Left cardiac atrium (tissue), 4 donors: ENCODE measurements at regions of chr18 and their contacts with region 1.

Region 1: GRCh38 chr18:74652392-74652988 is 54.8 kb downstream of the ZNF407 start:
- DNase-seq: no peak
- ATAC-seq: no peak

Region 2: GRCh38 chr18:74291771-74292540 is 360.5 kb before region 1 on chr18 and contains the start of gene CYB5A:
- intact Hi-C with region 1: no loop called
- DNase-seq: peak; percentile 98
- ATAC-seq: peak; percentile 97 to 100
- total RNA-seq, gene CYB5A: 66.7 to 122 TPM

Region 3: GRCh38 chr18:74598350-74599001 is 54.0 kb before region 1 on chr18:
- intact Hi-C with region 1: no loop called
- DNase-seq: peak; percentile 69
- ATAC-seq: peak; percentile 51 to 55

Region 4: DNA sequence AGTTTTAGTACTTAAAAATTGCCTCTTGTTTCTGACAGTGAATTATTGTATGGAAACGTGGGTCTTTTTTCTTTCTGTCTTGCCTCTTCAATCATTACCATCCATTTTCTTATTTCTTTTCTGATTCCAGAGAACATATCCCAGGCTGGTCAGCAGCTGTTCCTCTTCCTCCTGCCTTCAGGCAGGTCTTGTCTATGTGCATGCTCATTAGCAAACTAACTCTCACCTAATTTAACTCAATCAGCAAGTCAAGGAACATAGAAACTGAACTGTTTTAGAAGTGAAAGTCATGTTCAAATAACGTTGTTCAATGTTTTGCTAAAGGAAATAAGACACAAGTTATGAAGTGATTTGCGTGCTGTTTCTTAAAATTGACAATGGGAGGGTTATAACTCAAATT is 314.9 kb after region 1 on chr18:
- intact Hi-C with region 1: loop called in 1 of 2 experiments (anchors 5 kb)
- DNase-seq: no peak
- ATAC-seq: no peak

Region 5: GRCh38 chr18:75478996-75479880 is 826.7 kb after region 1 on chr18:
- intact Hi-C with region 1: loop called in 1 of 2 experiments (anchors 5 kb)
- DNase-seq: no peak
- ATAC-seq: peak; percentile 84

Region 6: DNA sequence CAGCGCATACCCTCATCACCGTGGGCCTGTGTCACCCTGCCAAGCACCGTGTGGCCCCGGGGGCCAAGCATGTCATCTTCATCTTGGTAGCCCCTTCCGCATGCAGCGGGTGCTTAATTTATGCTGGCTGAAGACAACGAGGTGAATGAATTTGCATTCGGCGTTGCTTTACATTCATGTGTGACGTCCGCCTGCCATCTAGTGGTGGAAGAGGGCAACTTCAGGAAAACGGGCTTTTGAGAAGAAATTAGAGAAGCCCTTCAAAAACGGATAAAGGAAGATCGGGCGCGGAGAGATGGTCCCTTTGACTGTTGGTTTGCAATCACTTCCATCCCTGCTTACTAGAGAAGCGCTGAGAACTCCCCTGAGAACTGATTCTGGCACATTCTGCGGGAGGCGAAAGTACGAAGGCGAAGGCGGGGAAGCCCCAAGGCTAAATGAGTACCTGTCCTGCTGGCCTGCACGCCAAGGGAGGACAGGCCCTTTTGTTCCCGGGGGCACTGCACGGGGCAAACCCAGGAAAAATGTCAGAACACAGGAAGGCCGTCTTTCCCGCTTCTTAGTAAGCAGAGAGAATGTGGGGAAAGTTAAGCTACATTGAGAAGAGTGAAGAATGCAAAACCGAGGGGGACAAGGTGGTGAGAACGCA is 1696.7 kb after region 1 on chr18:
- intact Hi-C with region 1: loop called in 1 of 2 experiments (anchors 10 kb)
- DNase-seq: peak; percentile 47
- ATAC-seq: peak in 1 of 2 donors; percentile 13